Psoas muscle (tissue), 8 donors: ENCODE measurements at regions of chr4 and their contacts with region 1.

Region 1: DNA sequence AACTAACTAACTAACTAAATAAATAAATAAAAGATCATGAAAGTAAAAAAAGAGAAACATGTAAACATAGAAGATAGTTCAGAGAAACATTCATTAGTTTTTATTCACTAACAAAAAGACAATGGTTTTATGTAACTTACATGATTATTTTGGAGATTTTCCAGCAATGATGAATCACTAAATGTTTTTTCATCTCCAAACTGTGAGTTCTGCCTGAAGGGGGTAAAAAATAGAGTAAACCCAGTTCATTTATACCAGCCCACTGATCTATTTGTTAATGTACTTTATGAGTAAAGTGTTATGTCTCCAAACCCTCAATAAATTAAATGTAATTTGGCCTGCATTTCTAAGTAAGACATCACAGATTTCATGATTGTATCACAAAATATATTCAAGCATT is 101.1 kb downstream of the ATP8A1 start:
- DNase-seq: no peak
- ATAC-seq: no peak
- H3K4me3 ChIP-seq: no peak overlapping the region
- H3K27ac ChIP-seq: no peak overlapping the region
- H3K4me1 ChIP-seq: peaks cover 4% of the 10 kb centered on the region
- H3K27me3 ChIP-seq: no peaks in the 10 kb centered on the region
- CTCF ChIP-seq: no peak

Region 2: GRCh38 chr4:42488114-42488513 is 67.7 kb before region 1 on chr4:
- intact Hi-C with region 1: no loop called
- DNase-seq: no peak
- ATAC-seq: no peak
- H3K4me3 ChIP-seq: no peak overlapping the region
- H3K27ac ChIP-seq: no peak overlapping the region
- H3K4me1 ChIP-seq: no peaks in the 10 kb centered on the region
- H3K27me3 ChIP-seq: no peaks in the 10 kb centered on the region
- CTCF ChIP-seq: no peak

Region 3: GRCh38 chr4:43782391-43782790 is 1226.6 kb after region 1 on chr4:
- intact Hi-C with region 1: loop called in 1 of 2 experiments (anchors 5 kb)
- DNase-seq: no peak
- ATAC-seq: no peak
- H3K4me3 ChIP-seq: no peak overlapping the region
- H3K27ac ChIP-seq: no peak overlapping the region
- H3K4me1 ChIP-seq: no peaks in the 10 kb centered on the region
- H3K27me3 ChIP-seq: no peaks in the 10 kb centered on the region
- CTCF ChIP-seq: no peak